ENCODE measurements at regions of chr17 and their contacts with region 1.

Region 1: GRCh38 chr17:79400989-79401703 is 209.7 kb downstream of the RBFOX3 start:
- DNase-seq: peak in 1 of 2 donors; percentile 80
- H3K4me3 ChIP-seq: peak overlapping the region in 1 of 2 donors; percentile 42
- H3K27ac ChIP-seq: no peak overlapping the region
- H3K4me1 ChIP-seq: peaks cover 0 to 3% of the 10 kb centered on the region in 2 donors
- H3K27me3 ChIP-seq: peaks cover 11% of the 10 kb centered on the region
- CTCF ChIP-seq: peak; percentile 64 to 95 (median 94)

Region 2: DNA sequence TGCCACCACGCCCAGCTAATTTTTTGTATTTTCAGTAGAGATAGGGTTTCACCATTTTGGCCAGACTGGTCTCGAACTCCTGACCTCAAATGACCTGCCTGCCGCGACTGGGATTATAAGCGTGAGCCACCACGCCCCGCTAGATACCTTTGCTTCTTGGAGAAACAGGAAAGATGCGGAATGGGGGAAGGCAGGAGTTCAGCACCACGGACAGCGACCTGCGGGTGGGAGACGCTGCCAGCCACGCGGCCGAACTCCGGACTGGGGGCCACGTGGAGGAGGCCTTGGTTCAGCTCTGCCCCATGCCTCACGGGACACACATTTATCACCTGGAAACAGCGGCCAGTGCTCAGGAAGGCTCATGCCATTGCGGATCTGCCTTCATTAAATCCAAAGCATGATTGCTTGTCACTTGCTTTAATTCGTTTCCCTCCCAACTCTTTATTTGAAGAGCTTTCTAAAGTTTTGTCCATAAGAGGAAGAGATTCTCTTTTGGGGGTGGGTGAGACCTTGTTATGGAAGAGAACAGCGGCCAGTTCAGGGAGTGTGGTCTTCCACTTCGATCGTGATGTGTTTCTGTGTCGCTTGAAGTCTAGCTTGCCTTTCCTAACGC is 106.6 kb before region 1 on chr17:
- intact Hi-C with region 1: no loop called
- DNase-seq: no peak
- H3K4me3 ChIP-seq: no peak overlapping the region
- H3K27ac ChIP-seq: no peak overlapping the region
- H3K4me1 ChIP-seq: no peaks in the 10 kb centered on the region
- H3K27me3 ChIP-seq: no peaks in the 10 kb centered on the region
- CTCF ChIP-seq: no peak

Region 3: DNA sequence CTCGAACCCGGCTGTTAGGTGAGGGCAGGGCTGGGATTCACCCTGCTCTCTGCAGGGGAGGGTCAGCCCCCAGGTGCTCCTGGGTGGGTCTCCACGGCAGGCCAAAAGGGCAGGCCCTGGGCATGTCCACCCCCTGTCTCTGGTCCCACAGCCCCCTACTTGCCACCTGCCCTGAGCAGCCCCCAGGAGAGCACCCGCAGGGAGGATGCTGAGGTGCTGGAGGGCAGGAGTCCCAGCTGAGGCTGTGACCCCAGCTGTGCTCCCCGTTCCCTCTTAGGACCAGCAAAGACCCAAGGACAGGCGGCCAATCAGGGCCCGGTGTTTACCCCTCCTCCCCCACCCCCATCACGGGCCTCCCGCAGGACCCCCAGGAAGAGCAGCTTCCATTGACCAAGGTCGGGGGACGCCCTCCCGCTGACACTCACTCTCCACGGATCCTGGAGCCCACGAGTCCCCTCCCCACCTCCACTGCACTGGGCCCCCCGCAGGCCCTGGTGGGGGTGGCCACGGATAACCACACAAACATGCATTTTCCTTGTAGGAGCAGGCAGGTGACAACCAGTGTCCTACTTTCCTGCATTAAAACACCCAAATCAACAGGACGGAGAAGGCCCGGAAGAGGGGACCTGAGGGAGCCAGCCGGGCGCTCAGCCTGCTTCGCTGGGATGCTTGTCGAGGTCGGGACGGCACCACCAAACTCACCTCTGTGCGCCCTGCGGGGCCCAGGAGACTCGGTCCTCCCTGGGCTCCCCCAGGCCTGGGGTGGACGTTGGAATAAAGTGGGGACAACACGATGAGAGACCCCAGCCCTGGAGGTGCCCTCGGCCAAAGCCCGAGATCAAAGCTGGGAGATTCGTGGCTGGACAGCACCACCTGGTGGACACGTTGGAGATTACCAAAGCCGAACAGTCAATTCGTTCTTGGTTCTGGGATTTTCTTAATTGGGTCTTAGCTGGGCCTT is 307.1 kb after region 1 on chr17:
- intact Hi-C with region 1: loop called (anchors 10 kb)
- DNase-seq: no peak
- H3K4me3 ChIP-seq: peak overlapping the region in 1 of 2 donors; percentile 42
- H3K27ac ChIP-seq: no peak overlapping the region
- H3K4me1 ChIP-seq: no peaks in the 10 kb centered on the region
- H3K27me3 ChIP-seq: no peaks in the 10 kb centered on the region
- CTCF ChIP-seq: peak; percentile 52 to 78 (median 72)